ENCODE measurements at regions of chr1 and their contacts with region 1.

Region 1: GRCh38 chr1:218339267-218339831 is 5.8 kb upstream of the TGFB2 start:
- DNase-seq: no peak
- ATAC-seq: no peak
- H3K4me3 Mint-ChIP-seq: no peak overlapping the region
- H3K27ac Mint-ChIP-seq: no peak overlapping the region
- H3K4me1 Mint-ChIP-seq: no peaks in the 10 kb centered on the region
- H3K27me3 Mint-ChIP-seq: peaks cover 3% of the 10 kb centered on the region

Region 2: DNA sequence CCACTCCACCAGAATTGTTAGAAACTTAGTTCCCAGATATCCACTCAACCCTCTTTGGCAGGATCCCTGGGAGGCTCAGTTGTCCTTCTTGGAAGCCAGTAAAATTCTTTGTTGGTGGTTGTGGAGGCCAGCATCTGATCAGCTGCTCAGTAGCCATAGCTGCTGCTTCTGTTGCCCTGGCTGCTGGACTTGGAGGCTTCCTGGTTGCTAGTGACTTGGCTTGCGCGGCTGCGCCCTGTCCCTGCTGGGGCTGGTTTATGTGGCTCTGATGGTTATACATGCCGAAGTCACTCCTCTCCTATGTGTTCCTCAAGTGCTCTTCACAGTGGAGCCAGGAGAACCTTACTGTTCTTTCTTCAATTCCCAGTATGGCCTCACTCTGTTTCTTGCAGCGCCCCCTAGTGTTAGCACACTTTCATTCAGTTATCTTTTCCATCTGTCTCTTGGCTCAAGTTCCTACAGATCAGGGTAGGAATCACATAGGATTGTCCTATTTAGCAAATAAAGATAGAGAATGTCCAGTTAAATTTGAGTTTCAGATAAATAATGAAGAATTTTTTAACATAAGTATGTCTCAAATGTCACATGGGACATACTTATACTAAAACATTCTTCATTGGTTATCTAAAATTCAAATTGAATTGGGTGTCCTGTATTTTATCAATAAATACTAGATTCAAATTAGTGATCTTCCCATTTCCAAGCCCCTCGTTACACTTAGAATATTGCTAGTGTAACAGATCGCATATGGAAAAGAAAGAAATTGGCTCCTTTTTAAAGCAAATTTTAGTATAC is 182.2 kb after region 1 on chr1:
- CTCF ChIA-PET with region 1: interaction called, 10 read pairs
- POLR2A ChIA-PET with region 1: no interaction called
- DNase-seq: peak; percentile 53
- ATAC-seq: no peak
- H3K4me3 Mint-ChIP-seq: no peak overlapping the region
- H3K27ac Mint-ChIP-seq: no peak overlapping the region
- H3K4me1 Mint-ChIP-seq: no peaks in the 10 kb centered on the region
- H3K27me3 Mint-ChIP-seq: peaks cover 10% of the 10 kb centered on the region

Measured in activated CD8-positive, alpha-beta T cell treated with anti-CD3 and anti-CD28 coated beads, Interleukin-2, amount 10 ng/mL, durations not matched to agents 7 days and 5 days (primary cell).